Left lung (tissue), 14 donors: ENCODE measurements at regions of chr3 and their contacts with region 1.

Region 1: DNA sequence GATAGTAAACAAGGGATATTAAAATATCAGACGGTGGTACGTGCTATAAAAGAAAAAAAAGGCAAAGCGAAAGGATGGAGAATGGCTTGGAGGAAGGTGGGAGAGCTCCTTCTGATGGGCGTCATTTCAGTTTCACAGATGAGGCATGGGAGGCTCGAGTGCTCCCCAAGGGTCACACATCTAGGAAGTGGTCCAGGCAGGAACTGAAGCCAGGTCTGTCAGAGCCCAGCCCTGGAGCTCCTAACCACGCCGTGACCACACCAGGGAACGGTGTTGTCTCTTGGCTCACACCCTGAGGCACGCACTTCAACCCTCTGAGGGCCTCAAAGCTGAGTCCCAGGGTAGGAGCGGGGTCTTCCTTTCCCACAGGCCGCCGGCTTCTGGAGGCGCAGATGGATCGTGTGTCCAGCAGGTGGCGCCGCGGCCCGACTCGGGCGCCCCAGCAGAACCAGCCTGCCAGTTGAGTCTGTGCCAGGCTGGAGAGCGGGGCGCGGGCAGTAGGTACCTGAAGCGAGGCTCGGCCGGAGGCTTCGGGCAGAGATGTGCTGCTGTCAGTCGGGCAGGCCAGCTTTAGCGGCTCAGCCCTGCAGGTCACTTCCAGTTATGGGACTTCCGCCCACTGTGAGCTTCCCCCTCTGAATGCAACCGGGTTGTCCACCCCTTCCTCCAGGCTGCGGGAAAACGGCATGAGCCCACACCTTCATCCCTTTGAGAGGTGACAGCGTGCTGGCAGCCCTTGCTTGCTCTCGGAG is 68.1 kb downstream of the SLC6A1 start:
- DNase-seq: peak; percentile 29 to 93 (median 58)
- ATAC-seq: peak; percentile 91
- H3K4me3 ChIP-seq: no peak overlapping the region
- H3K27ac ChIP-seq: no peak overlapping the region
- H3K4me1 ChIP-seq: peaks cover 5 to 6% of the 10 kb centered on the region in 2 donors
- H3K27me3 ChIP-seq: peaks cover 0 to 23% of the 10 kb centered on the region in 2 donors
- CTCF ChIP-seq: peak; percentile 88 to 90

Region 2: GRCh38 chr3:10758304-10759061 is 302.2 kb before region 1 on chr3:
- intact Hi-C with region 1: loop called in 1 of 2 experiments (anchors 10 kb)
- DNase-seq: peak in 3 of 4 donors; percentile 17 to 60 (median 46)
- ATAC-seq: peak; percentile 98
- H3K4me3 ChIP-seq: no peak overlapping the region
- H3K27ac ChIP-seq: no peak overlapping the region
- H3K4me1 ChIP-seq: no peaks in the 10 kb centered on the region
- H3K27me3 ChIP-seq: peaks cover 0 to 61% of the 10 kb centered on the region in 2 donors
- CTCF ChIP-seq: peak; percentile 71 to 76

Region 3: DNA sequence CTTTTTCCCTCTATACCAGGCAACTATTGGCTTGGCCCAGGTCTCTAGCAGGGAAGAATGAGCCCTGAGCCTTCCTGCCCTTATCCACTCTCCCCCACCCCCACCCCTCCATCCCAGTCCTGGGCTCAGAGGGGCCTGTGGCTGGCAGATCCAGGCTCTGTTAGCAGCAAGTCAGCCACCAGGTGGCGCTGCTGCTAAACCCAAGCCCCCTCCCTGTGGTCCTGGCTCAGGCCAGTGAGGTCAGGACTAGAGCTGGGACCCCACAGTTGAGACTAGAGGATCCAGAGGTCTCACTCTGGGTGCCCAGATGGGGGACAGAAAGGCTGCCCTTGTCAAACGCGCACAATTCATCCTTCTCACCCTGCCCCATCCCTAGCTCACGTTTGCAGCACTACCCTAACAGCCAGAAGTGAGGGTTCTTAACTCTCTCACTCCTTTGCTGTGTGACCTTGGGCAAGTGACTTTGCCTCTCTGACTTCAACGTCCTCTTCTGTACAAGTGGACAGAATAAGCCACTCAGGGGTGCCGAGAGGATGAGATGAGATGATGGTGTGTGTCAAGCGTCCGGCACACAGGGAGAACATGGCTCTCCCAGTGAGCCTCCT is 114.9 kb before region 1 on chr3:
- intact Hi-C with region 1: loop called (anchors 2 to 10 kb)
- DNase-seq: peak in 3 of 4 donors; percentile 42 to 87 (median 66)
- ATAC-seq: peak; percentile 91
- H3K4me3 ChIP-seq: no peak overlapping the region
- H3K27ac ChIP-seq: no peak overlapping the region
- H3K4me1 ChIP-seq: no peaks in the 10 kb centered on the region
- H3K27me3 ChIP-seq: peaks cover 0 to 9% of the 10 kb centered on the region in 2 donors
- CTCF ChIP-seq: peak; percentile 84 to 86

Region 4: DNA sequence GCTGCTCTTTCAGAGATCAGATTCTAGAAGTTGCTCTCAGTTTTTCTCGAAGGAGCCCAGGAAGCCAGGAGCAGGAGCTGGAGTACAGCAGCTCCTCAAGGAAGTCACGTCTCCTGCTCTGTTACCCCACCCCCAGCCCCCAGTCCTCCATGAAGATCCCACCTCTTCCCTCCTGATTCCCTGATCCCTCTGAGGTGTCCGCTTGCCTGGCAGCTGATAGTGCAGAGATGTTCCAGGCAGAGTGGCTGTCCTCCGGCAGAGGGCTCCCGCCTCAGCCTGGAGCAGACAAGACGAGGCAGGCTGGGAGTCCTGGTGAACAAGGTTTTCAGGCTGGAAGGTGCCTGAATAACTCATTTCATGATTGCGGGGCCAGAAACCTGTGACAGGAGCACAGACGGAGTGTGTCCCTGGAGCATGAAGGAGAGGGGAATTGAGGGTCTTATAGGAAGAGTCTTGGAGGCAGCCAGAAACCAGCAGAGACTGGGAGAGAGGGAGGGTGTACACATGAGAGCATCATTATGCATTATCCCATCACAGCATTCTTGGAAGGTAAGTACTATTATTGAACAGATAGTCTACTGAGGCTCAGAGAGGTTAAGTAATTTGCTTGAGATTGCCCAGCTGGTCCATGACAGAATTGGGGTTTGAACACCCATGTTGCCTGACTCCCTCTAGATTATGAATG is 94.8 kb after region 1 on chr3:
- intact Hi-C with region 1: no loop called
- DNase-seq: peak; percentile 29 to 79 (median 59)
- ATAC-seq: peak; percentile 87
- H3K4me3 ChIP-seq: peak overlapping the region; percentile 43 to 48
- H3K27ac ChIP-seq: peak overlapping the region; percentile 42 to 63
- H3K4me1 ChIP-seq: peaks cover 18 to 42% of the 10 kb centered on the region in 2 donors
- H3K27me3 ChIP-seq: peaks cover 7 to 49% of the 10 kb centered on the region in 2 donors
- CTCF ChIP-seq: peak; percentile 24 to 66

Region 5: DNA sequence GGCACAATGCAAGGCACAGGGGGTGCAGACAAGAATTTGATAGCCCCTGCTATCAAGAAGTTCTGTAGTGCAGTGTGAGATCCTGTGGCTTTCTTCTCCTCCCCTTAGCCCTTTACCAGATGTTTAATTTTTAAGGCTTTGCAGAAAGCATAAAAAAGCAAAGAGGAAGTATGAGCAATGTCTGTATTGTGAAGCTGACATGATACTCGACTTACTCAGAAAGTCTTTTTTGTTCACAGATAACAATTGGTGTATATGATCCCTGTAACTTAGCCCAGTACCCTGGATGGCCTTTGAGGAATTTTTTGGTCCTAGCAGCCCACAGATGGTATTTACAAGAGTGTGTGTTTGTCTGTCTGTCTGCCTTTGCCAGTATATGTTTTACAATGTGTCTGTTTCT is 270.4 kb after region 1 on chr3:
- intact Hi-C with region 1: loop called in 1 of 2 experiments (anchors 5 kb)
- DNase-seq: no peak
- ATAC-seq: no peak
- H3K4me3 ChIP-seq: no peak overlapping the region
- H3K27ac ChIP-seq: no peak overlapping the region
- H3K4me1 ChIP-seq: no peaks in the 10 kb centered on the region
- H3K27me3 ChIP-seq: no peaks in the 10 kb centered on the region
- CTCF ChIP-seq: no peak